ENCODE measurements at regions of chr11 and their contacts with region 1.

Region 1: GRCh38 chr11:83257761-83258168 is 28.4 kb downstream of the CCDC90B start:
- DNase-seq: no peak

Region 2: GRCh38 chr11:83205608-83206185 is 52.1 kb before region 1 on chr11:
- intact Hi-C with region 1: loop called in 1 of 2 experiments (anchors 2 kb)
- DNase-seq: no peak

Region 3: DNA sequence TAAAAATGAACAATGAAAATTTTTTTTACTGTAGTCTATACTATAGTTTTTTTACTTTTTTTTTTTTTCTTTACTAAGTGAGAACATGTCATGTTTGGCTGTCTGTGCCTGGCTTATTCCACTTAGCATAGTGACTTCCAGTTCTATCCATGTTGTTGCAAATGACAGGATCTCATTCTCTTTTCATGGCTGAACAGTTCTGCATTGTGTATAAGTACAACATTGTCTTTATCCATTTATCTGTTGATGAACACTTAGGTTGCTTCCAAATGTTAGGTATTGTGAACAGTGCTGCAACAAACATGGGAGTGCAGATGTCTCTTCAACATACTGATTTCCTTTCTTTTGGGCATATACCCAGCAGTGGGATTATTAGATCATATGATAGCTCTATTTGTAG is 116.5 kb after region 1 on chr11:
- intact Hi-C with region 1: no loop called
- DNase-seq: no peak

Measured in posterior vena cava (tissue), 2 donors.